IMR-90 (cell line): ENCODE measurements at regions of chr14 and their contacts with region 1.

Region 1: GRCh38 chr14:80996049-80996901 is 40.9 kb downstream of the TSHR start:
- DNase-seq: peak; percentile 84
- ATAC-seq: peak; percentile 99
- H3K4me3 ChIP-seq: no peak overlapping the region
- H3K27ac ChIP-seq: no peak overlapping the region
- H3K4me1 ChIP-seq: no peaks in the 10 kb centered on the region
- H3K27me3 ChIP-seq: peaks cover 4% of the 10 kb centered on the region
- CTCF ChIP-seq: peak; percentile 75
- POLR2A ChIP-seq: no peak
- RAD21 ChIP-seq: peak; percentile 48

Region 2: GRCh38 chr14:80941241-80942182 is 54.8 kb before region 1 on chr14 and contains the start of gene CEP128:
- CTCF ChIA-PET with region 1: no interaction called
- POLR2A ChIA-PET with region 1: no interaction called
- dilution Hi-C with region 1: no loop called
- in situ Hi-C with region 1: no loop called
- intact Hi-C with region 1: no loop called
- DNase-seq: peak; percentile 98
- ATAC-seq: peak; percentile 100
- H3K4me3 ChIP-seq: peak within 1 kb of the TSS; percentile 76
- H3K27ac ChIP-seq: peak within 1 kb of the TSS; percentile 76
- H3K4me1 ChIP-seq: no peaks in the 10 kb centered on the region; the same call in 1 of the 2 replicates
- H3K27me3 ChIP-seq: no peaks in the 10 kb centered on the region
- CTCF ChIP-seq: no peak
- POLR2A ChIP-seq: no peak
- RAD21 ChIP-seq: no peak
- total RNA-seq, gene CEP128: 5.7 and 7.8 TPM in 2 replicates

Region 3: DNA sequence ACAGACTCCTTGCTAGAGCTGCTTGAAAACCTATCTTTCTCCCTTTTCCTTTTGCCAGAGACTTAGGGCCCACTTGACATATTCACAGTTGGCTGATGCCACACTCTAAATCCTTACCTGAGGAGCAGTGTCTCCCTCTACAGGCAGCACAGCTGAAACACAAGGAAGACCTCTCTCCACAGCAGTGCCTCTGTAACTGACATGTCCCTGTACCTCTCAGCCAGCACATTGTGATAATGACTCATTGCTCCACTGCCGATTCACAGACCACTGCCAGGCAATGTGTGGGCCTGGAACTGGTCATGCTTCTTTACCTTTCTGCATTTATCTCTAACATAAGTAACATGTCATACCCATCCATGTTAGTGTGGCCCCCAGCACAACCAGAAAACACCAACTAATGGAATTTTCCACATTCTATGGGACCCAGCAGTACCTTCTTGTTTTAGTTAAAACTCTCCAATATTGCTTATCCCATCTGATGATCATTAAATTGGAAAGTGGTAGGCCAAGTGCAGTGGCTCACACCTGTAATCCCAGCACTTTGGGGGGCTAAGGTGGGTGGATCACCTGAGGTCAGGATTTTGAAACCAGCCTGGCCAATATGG is 168.0 kb after region 1 on chr14:
- CTCF ChIA-PET with region 1: interaction called, 22 read pairs
- POLR2A ChIA-PET with region 1: no interaction called
- dilution Hi-C with region 1: no loop called
- in situ Hi-C with region 1: loop called (anchors 10 kb)
- intact Hi-C with region 1: loop called (anchors 1 kb)
- DNase-seq: peak; percentile 77
- ATAC-seq: peak; percentile 88
- H3K4me3 ChIP-seq: no peak overlapping the region
- H3K27ac ChIP-seq: no peak overlapping the region
- H3K4me1 ChIP-seq: no peaks in the 10 kb centered on the region
- H3K27me3 ChIP-seq: no peaks in the 10 kb centered on the region
- CTCF ChIP-seq: peak; percentile 60
- POLR2A ChIP-seq: no peak
- RAD21 ChIP-seq: peak; percentile 67

Region 4: GRCh38 chr14:81170104-81170828 is 174.0 kb after region 1 on chr14:
- CTCF ChIA-PET with region 1: interaction called, 22 read pairs
- POLR2A ChIA-PET with region 1: no interaction called
- dilution Hi-C with region 1: no loop called
- in situ Hi-C with region 1: loop called (anchors 10 kb)
- intact Hi-C with region 1: loop called (anchors 1 kb)
- DNase-seq: peak; percentile 82
- ATAC-seq: peak; percentile 98
- H3K4me3 ChIP-seq: peak overlapping the region; percentile 47
- H3K27ac ChIP-seq: peak overlapping the region; percentile 73
- H3K4me1 ChIP-seq: peaks cover 9% of the 10 kb centered on the region; the same call in 1 of the 2 replicates
- H3K27me3 ChIP-seq: no peaks in the 10 kb centered on the region
- CTCF ChIP-seq: peak; percentile 88
- POLR2A ChIP-seq: peak; percentile 62
- RAD21 ChIP-seq: peak; percentile 64

Region 5: GRCh38 chr14:81193924-81194633 is 197.8 kb after region 1 on chr14:
- CTCF ChIA-PET with region 1: no interaction called
- POLR2A ChIA-PET with region 1: no interaction called
- dilution Hi-C with region 1: no loop called
- in situ Hi-C with region 1: no loop called
- intact Hi-C with region 1: no loop called
- DNase-seq: no peak
- ATAC-seq: no peak
- H3K4me3 ChIP-seq: no peak overlapping the region
- H3K27ac ChIP-seq: no peak overlapping the region
- H3K4me1 ChIP-seq: no peaks in the 10 kb centered on the region
- H3K27me3 ChIP-seq: no peaks in the 10 kb centered on the region
- CTCF ChIP-seq: no peak
- POLR2A ChIP-seq: no peak
- RAD21 ChIP-seq: no peak

Region 6: GRCh38 chr14:81211844-81212243 is 215.6 kb after region 1 on chr14:
- CTCF ChIA-PET with region 1: no interaction called
- POLR2A ChIA-PET with region 1: no interaction called
- dilution Hi-C with region 1: no loop called
- in situ Hi-C with region 1: no loop called
- intact Hi-C with region 1: loop called (anchors 2 kb)
- DNase-seq: peak; percentile 17
- ATAC-seq: peak; percentile 67
- H3K4me3 ChIP-seq: no peak overlapping the region
- H3K27ac ChIP-seq: no peak overlapping the region
- H3K4me1 ChIP-seq: peaks cover 2% of the 10 kb centered on the region; the same call in 1 of the 2 replicates
- H3K27me3 ChIP-seq: no peaks in the 10 kb centered on the region
- CTCF ChIP-seq: peak; percentile 47
- POLR2A ChIP-seq: no peak
- RAD21 ChIP-seq: peak; percentile 54

Region 7: GRCh38 chr14:81464247-81465002 is 468.1 kb after region 1 on chr14:
- CTCF ChIA-PET with region 1: interaction called, 3 read pairs
- POLR2A ChIA-PET with region 1: no interaction called
- dilution Hi-C with region 1: no loop called
- in situ Hi-C with region 1: no loop called
- intact Hi-C with region 1: loop called (anchors 1 kb)
- DNase-seq: peak; percentile 64
- ATAC-seq: peak; percentile 79
- H3K4me3 ChIP-seq: peak overlapping the region; percentile 51
- H3K27ac ChIP-seq: no peak overlapping the region
- H3K4me1 ChIP-seq: no peaks in the 10 kb centered on the region
- H3K27me3 ChIP-seq: no peaks in the 10 kb centered on the region; the same call in 1 of the 2 replicates
- CTCF ChIP-seq: peak; percentile 92
- POLR2A ChIP-seq: no peak
- RAD21 ChIP-seq: peak; percentile 82